Posterior cingulate gyrus (tissue), 11 donors: ENCODE measurements at regions of chr11 and their contacts with region 1.

Region 1: DNA sequence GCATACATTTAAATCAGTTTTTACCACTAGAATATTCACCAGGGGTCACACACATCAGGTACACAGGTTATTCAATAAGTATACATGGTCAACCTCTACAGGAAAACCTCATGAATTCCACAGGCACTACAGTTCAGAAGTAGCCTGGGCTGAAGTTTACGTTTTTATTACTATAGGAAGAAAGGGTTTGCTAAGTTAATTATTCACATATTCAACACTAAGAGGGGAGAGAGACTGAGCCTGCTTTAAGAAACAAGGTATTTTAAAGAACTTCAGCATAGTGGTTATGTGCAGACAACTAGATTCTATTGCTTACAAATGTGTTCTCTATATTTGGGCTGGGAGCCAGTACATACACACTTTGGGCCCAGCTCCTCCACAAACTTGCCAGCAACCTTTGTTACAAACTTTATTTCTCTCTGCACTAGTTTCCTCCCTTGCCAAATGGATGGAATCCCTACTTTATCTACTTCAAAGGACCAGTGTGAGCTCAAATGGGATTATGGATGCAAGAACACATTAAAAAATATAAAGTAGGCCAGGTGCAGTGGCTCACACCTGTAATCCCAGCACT is 31.9 kb downstream of the IL18BP start:
- DNase-seq: no peak

Region 2: GRCh38 chr11:72091005-72091691 is 60.6 kb after region 1 on chr11:
- intact Hi-C with region 1: loop called (anchors 1 kb)
- DNase-seq: peak in 8 of 10 donors; percentile 64 to 93 (median 77)

Region 3: DNA sequence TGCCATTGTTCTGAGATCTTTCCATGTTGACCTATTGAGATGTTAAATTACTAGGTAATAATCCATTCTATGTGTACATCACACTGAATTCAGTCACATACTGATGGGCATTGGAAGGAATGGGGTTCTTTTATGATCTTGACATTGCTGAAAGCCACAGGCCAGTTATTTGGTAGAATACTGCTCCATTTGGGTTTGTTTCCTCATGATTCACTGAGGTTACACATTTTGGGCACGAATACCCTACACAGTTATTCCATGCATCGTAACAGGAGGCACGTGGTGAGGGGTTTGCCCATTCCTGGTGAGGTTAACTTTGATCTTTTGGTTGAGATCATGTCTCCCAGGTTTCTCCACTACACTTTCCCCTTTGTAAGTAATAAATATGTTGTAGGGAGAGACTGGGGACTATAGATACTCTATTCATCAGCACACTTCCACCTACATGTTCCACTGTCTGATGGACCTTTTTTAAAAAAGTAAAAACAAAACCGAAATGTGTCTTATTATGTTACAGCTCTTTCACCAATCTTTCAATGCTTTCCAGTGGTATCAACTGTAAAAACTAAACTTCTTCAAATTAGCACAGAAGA is 149.3 kb after region 1 on chr11:
- intact Hi-C with region 1: loop called (anchors 5 kb)
- DNase-seq: no peak

Region 4: DNA sequence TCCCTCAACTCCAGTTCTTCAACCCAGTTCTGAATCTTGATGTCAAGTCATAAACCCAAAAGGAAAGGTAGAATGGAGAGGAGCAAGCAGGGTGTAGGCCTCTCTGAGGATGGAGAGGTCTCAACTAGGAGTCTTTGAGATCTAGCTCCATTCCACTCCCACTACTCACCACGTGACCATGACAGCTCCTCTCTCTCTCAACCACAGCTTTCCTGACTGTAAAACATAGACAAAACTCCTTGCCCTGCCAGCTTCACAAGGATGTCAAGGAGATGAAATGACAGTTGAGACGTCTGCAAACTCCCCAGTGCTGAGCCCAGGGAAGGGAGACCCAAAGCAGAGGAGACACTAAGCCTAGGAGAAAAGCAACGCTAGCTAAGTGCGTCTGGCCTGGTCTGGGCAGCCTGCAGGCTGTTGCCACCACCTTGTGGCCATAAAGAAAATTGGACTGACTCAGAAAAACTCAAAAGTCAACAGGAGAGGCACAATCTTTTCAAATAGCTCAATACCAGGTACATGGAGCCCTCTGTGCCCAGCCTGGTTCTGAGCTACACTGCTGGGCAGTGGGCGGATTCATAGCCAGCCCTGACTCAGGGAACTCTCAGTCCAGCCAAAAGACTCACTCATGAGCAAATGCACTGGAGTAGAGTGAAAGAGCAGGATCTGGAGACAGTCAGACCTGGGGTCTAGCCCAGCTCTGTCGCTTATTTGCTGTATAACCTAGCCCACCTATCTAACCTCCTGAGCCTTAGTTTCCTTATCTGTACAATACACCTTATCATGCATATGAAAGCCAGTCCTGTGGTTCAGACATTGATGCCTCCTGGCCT is 400.4 kb after region 1 on chr11:
- intact Hi-C with region 1: loop called (anchors 5 kb)
- DNase-seq: peak in 8 of 10 donors; percentile 25 to 92 (median 55)